Endothelial cell of umbilical vein (primary cell): ENCODE measurements at regions of chr5 and their contacts with region 1.

Region 1: GRCh38 chr5:57435701-57436134 is 46.9 kb downstream of the ACTBL2 start:
- DNase-seq: peak; percentile 99
- H3K4me3 ChIP-seq: no peak overlapping the region
- H3K27ac ChIP-seq: peak overlapping the region; percentile 98
- H3K4me1 ChIP-seq: peaks cover 71% of the 10 kb centered on the region
- H3K27me3 ChIP-seq: no peaks in the 10 kb centered on the region
- CTCF ChIP-seq: no peak
- POLR2A ChIP-seq: peak; percentile 37

Region 2: DNA sequence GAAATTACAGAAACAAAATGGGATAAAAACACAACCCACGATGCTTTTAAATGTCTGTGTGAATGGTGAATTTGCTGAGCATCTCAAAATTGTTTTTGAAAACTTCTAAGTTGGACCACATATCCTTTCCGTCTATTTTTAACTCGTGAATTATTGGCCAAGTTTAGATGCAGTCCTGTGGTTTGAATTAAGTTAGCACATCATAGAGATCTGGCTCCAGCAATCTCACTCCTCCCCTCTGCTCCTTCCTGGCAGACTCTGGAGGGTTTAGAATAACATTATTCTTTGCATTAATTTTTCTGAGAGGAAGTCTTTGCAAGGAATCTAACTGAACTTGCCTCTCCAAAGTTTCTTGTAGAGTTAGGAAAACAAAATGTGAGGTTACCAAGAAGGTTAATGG is 1188.1 kb before region 1 on chr5:
- CTCF ChIA-PET with region 1: no interaction called
- POLR2A ChIA-PET with region 1: no interaction called
- dilution Hi-C with region 1: no loop called
- intact Hi-C with region 1: no loop called
- DNase-seq: peak; percentile 49
- H3K4me3 ChIP-seq: no peak overlapping the region
- H3K27ac ChIP-seq: no peak overlapping the region
- H3K4me1 ChIP-seq: no peaks in the 10 kb centered on the region
- H3K27me3 ChIP-seq: no peaks in the 10 kb centered on the region
- CTCF ChIP-seq: no peak
- POLR2A ChIP-seq: no peak

Region 3: GRCh38 chr5:57338068-57338892 is 97.4 kb before region 1 on chr5:
- CTCF ChIA-PET with region 1: no interaction called
- POLR2A ChIA-PET with region 1: no interaction called
- dilution Hi-C with region 1: no loop called
- intact Hi-C with region 1: no loop called
- DNase-seq: peak; percentile 36
- H3K4me3 ChIP-seq: no peak overlapping the region
- H3K27ac ChIP-seq: no peak overlapping the region
- H3K4me1 ChIP-seq: peaks cover 13% of the 10 kb centered on the region
- H3K27me3 ChIP-seq: no peaks in the 10 kb centered on the region
- CTCF ChIP-seq: peak; percentile 27 to 44
- POLR2A ChIP-seq: no peak

Region 4: DNA sequence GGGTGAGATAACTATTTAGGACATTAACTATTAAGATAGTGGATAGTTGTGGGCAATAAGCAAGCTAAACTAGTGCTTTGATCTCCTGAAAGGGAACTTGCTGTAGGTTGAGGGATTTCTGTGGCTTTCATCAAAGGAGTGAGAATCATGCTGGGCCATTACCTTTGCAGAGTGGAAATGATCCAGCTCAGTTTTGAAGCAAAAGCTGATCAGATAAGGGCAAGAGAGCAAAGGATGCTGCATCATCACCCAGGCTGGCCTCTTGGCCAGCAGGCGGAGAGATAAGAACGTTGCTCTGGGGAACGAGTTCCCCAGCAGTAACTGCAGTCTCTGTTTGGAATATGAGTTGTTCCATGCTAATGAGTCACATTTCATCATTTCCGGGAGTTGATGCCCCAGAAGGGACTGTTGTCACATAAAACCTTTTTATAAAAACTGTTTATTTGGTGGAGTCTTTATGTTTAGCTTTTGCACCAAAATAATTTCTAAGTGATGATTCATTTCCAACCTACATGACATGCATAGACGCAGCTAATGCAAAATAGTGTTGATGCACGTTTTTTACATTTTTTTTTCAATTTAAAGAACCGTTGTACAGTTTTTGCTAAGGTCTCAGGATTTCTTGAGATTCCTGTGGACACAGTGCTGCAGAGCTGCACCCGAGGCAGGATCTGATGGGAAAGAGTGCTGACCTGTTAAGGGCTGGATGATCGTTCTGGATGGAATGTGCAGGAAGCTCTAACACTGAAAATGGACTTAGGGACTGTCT is 52.4 kb before region 1 on chr5:
- CTCF ChIA-PET with region 1: interaction called, 11 read pairs
- POLR2A ChIA-PET with region 1: no interaction called
- dilution Hi-C with region 1: no loop called
- intact Hi-C with region 1: loop called (anchors 1 kb)
- DNase-seq: peak; percentile 96
- H3K4me3 ChIP-seq: peak overlapping the region in 1 of 3 experiments; percentile 40
- H3K27ac ChIP-seq: peak overlapping the region; percentile 94
- H3K4me1 ChIP-seq: peaks cover 19% of the 10 kb centered on the region
- H3K27me3 ChIP-seq: no peaks in the 10 kb centered on the region
- CTCF ChIP-seq: peak in 1 of 2 donors; percentile 33
- POLR2A ChIP-seq: peak; percentile 60

Region 5: GRCh38 chr5:57458443-57458842 is 22.7 kb after region 1 on chr5:
- CTCF ChIA-PET with region 1: no interaction called
- POLR2A ChIA-PET with region 1: no interaction called
- dilution Hi-C with region 1: no loop called
- intact Hi-C with region 1: no loop called
- DNase-seq: no peak
- H3K4me3 ChIP-seq: no peak overlapping the region
- H3K27ac ChIP-seq: no peak overlapping the region
- H3K4me1 ChIP-seq: peaks cover 2% of the 10 kb centered on the region
- H3K27me3 ChIP-seq: no peaks in the 10 kb centered on the region
- CTCF ChIP-seq: no peak
- POLR2A ChIP-seq: no peak

Region 6: GRCh38 chr5:57488215-57488955 is 52.7 kb after region 1 on chr5:
- CTCF ChIA-PET with region 1: interaction called, 3 read pairs
- POLR2A ChIA-PET with region 1: no interaction called
- dilution Hi-C with region 1: no loop called
- intact Hi-C with region 1: loop called (anchors 1 kb)
- DNase-seq: peak; percentile 91
- H3K4me3 ChIP-seq: no peak overlapping the region
- H3K27ac ChIP-seq: peak overlapping the region; percentile 90
- H3K4me1 ChIP-seq: peaks cover 51% of the 10 kb centered on the region
- H3K27me3 ChIP-seq: no peaks in the 10 kb centered on the region
- CTCF ChIP-seq: no peak
- POLR2A ChIP-seq: peak; percentile 52

Region 7: GRCh38 chr5:57698769-57699168 is 263.1 kb after region 1 on chr5:
- CTCF ChIA-PET with region 1: no interaction called
- POLR2A ChIA-PET with region 1: no interaction called
- dilution Hi-C with region 1: no loop called
- intact Hi-C with region 1: loop called (anchors 5 kb)
- DNase-seq: peak; percentile 75
- H3K4me3 ChIP-seq: no peak overlapping the region
- H3K27ac ChIP-seq: peak overlapping the region; percentile 60
- H3K4me1 ChIP-seq: peaks cover 29% of the 10 kb centered on the region
- H3K27me3 ChIP-seq: no peaks in the 10 kb centered on the region
- CTCF ChIP-seq: no peak
- POLR2A ChIP-seq: peak; percentile 15

Region 8: GRCh38 chr5:58240286-58240685 is 804.6 kb after region 1 on chr5:
- CTCF ChIA-PET with region 1: no interaction called
- POLR2A ChIA-PET with region 1: no interaction called
- dilution Hi-C with region 1: no loop called
- intact Hi-C with region 1: loop called (anchors 5 kb)
- DNase-seq: peak; percentile 89
- H3K4me3 ChIP-seq: no peak overlapping the region
- H3K27ac ChIP-seq: peak overlapping the region; percentile 89
- H3K4me1 ChIP-seq: peaks cover 54% of the 10 kb centered on the region
- H3K27me3 ChIP-seq: no peaks in the 10 kb centered on the region
- CTCF ChIP-seq: no peak
- POLR2A ChIP-seq: no peak